GM18951 (cell line): ENCODE measurements at regions of chr6 and their contacts with region 1.

Region 1: DNA sequence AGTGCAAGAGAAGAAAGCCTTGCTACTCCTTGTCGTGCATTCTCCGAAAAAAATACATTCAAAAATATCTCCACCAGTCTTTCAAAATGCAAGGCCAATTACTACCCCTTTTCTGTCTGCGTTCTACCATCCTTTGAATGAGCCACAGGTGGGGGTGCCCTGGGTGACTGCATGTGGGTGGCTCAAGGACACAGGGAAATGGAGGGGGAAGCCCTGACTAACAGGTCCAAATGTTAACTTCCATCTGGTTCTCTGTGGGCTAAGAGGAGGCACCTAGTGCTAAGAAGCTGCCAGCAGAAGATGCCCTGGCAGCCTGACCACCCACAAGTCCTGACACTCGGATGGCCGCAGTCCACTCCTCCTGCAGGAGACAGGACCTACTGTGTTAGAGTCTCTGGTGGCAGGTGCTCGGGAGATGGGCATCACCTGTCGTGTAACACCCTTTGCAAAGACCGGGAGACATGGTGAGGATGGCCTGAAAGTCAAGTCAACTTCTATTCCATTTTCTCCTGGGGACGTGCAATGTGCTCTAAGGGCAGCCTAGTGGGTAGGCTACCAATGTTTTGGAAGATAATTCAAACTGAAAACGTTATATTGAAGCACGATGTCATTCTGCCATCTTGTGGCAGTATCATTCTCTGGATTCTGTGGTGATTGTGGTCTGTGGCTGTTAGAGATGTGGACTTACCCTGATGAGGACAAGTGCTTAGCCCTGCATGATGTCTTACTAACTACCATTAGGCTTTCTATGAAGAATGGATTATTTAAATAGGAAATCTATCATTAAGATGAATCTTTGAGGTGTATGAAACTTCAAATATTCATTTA is 27.4 kb upstream of the IGF2R start:
- POLR2A ChIP-seq: no peak

Region 2: DNA sequence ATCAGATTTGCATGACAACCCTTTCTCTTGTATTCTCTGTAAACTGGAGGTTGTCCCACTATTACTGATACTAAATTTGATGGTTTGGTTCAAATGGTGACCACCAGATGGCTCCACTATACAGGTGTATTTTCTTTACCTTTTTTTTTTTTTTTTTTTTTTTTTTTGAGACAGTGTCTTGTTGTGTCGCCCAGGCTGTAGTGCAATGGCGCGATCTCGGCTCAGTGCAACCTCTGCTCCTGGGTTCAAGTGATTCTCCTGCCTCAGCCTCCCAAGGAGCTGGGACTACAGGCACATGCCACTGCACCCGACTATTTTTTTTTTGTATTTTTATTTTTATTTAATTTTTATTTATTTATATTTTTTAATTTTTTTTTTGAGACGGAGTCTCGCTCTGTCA is 220.8 kb before region 1 on chr6:
- in situ Hi-C with region 1: loop called (anchors 25 kb)
- POLR2A ChIP-seq: no peak

Region 3: DNA sequence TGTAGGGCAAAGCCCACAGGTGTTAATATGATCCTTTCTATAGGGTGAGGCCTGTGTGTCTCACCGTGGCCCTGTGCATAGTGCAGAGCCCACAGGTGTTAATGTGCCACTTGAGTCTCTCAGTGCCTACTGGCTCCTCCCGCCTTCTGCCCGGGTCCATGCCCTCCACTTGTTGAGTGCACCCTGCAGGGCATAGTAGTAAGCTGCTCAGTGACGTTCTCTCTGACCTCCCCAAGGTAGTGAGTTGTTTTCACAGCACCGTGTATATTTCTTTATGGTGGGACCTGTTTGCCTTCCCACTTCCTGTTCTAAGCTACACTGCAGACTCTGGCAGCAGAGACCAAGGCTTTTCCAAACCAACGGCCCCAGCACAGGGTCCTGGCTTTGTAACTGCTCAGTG is 115.6 kb after region 1 on chr6:
- in situ Hi-C with region 1: no loop called
- POLR2A ChIP-seq: no peak